Activated CD4-positive, alpha-beta T cell treated with anti-CD3 and anti-CD28 coated beads, Interleukin-2, amount 10 ng/mL, durations not matched to agents 7 days and 5 days (primary cell): ENCODE measurements at regions of chr9 and their contacts with region 1.

Region 1: GRCh38 chr9:90102292-90102901 is 497.6 kb downstream of the GADD45G start:
- DNase-seq: peak; percentile 87
- H3K4me3 Mint-ChIP-seq: no peak overlapping the region
- H3K27ac Mint-ChIP-seq: no peak overlapping the region
- H3K4me1 Mint-ChIP-seq: peaks cover 17% of the 10 kb centered on the region
- H3K27me3 Mint-ChIP-seq: peaks cover 10% of the 10 kb centered on the region

Region 2: DNA sequence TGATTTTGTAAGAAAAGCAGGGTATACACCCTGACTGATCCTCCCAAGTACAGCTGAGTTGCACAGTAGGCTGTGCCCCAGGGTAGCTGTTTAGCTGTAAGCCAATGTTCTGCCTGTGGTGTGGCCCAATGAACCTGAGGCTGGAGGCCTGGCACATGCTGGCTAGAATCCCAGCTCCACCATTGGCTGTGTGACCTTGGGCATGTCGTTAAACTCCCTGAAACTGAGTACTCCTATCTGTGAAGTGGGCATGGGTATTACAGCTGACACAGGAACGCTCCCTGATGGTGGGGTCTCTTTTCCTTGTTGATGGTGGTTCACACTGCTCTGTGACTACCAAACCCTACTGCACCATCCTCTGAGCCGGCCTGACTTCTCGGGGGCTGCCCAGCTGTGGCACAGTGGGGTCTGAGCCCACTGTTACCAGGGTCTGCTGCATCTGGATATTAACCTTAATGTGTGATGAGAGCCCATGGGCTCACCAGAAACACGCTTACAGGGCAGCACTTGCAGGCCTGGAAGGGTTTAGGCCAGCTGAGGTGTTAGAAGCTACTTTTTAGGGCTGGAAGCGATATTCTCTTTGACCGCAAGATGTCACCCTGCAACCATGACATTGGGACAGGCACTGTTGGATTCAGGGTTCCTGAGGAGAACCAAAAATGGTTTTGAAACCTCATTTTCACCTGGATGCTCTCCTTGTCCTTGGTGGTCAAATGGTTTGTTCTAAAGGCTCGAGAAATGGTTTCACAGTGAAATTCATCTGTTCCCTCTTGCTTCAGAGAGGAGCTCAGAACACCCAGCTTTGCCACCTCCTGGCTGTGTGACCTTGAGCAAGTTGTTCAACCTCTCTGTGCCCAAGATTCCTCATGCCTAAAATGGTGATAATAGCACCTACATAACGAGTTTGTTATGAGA is 504.4 kb before region 1 on chr9:
- CTCF ChIA-PET with region 1: interaction called, 82 read pairs
- POLR2A ChIA-PET with region 1: interaction called, 3 read pairs
- DNase-seq: peak; percentile 68
- H3K4me3 Mint-ChIP-seq: no peak overlapping the region
- H3K27ac Mint-ChIP-seq: no peak overlapping the region
- H3K4me1 Mint-ChIP-seq: peaks cover 2% of the 10 kb centered on the region
- H3K27me3 Mint-ChIP-seq: peaks cover 31% of the 10 kb centered on the region

Region 3: DNA sequence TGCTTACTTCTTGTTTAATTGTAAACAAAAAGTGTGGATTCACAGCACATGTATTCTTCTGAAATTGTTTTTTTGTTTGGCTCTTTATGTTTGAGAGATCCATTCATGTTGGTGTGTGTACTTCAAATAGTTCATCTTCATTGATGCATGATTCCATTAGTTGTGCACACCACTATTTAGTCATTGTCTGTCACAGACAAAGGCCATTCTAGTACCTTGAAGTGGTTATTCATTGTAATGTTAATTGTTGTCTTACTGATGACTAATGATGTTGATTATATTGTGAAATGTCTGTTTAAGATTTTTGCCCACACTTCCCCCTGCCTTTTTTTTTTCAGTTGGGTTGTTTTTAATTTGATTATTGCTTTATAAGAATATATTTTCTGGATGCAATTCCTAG is 148.9 kb after region 1 on chr9:
- CTCF ChIA-PET with region 1: no interaction called
- POLR2A ChIA-PET with region 1: no interaction called
- DNase-seq: no peak
- H3K4me3 Mint-ChIP-seq: no peak overlapping the region
- H3K27ac Mint-ChIP-seq: no peak overlapping the region
- H3K4me1 Mint-ChIP-seq: no peaks in the 10 kb centered on the region
- H3K27me3 Mint-ChIP-seq: peaks cover 11% of the 10 kb centered on the region